HEK293T (cell line): ENCODE measurements at regions of chr2 and their contacts with region 1.

Region 1: GRCh38 chr2:121128754-121129659 is 156.0 kb downstream of the TFCP2L1 start:
- DNase-seq: peak; percentile 66

Region 2: DNA sequence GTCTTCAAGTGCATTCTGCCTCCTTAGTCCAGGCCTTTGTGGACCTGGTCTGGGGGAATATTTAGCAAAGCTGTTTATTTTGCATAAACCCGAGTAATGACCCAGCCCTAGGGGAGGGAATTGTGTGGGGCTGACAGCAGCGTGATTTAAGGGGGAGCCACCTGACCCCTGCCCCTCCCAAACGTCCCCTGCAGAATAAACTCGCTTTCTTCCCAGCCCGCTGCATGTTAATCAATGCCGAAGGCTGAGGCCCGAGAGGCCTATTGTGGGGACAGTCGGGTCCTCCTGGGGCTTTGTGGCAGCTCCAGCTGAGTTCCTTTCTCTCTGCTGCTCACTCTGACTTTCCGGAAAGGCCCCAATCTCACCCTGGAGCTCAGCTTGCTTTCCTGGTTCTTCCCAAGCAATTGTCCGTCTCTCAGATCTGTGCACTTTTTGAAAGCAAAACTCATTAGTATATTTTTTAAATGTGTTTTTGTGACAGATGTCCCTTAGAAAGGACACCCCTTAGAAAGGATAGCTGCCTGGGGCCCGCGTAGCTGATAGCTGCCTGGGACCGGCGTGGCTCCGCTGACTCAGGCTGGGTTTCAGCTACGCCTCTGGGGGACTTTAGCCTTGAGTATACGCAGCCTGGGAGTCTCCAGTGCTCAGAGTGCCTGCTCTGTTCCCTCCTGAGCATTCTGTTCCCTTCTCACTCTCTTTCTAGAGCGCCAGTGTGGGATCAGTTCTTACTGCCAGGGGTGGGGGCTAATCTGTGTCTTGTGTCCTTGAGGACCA is 235.0 kb before region 1 on chr2:
- CTCF ChIA-PET with region 1: no interaction called
- POLR2A ChIA-PET with region 1: no interaction called
- DNase-seq: peak; percentile 28

Region 3: DNA sequence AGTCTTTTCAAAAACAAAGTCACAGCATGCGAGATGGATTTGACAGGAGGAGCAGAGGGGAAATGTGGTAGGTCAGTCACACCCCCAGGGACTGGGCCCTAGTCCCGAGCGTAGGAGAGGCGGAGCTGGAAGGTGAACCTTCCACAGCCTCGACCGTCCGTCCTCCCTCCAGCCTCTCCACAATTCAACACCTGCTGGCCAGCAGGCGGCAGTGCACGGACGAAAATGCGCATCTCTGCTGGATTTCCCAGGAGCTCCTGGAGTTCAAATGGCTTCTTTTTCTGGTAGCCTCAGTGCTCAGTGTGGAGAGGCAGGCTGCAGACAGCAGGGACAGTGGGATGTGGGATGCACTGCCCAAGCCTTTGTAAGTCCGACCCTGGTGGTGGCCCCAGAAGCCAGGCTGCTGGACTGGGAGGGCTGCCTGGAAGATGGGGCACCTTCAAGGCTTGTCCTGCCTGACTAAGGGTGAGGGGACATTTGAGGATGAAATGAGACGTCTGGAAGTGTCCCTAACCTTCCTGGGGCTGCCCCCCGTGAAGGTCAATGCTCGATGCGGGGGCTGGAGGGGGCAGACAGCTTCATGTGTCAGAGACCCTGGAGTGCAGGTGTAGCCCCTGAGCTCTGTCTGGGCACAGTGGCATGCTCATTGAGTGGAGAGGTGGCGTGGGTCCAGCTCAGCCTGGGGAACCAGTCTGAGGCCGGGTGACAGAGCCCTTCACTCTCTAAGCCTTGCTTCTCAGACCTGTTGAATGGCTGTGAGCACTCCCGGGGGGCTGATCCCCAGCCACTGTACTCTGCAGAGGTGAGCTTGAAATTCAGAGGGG is 33.5 kb before region 1 on chr2:
- CTCF ChIA-PET with region 1: interaction called, 18 read pairs
- POLR2A ChIA-PET with region 1: interaction called, 3 read pairs
- DNase-seq: peak; percentile 85

Region 4: GRCh38 chr2:121140734-121141133 is 11.7 kb after region 1 on chr2:
- CTCF ChIA-PET with region 1: interaction called, 12 read pairs
- POLR2A ChIA-PET with region 1: no interaction called
- DNase-seq: no peak

Region 5: GRCh38 chr2:121356058-121356640 is 227.1 kb after region 1 on chr2:
- CTCF ChIA-PET with region 1: interaction called, 33 read pairs
- POLR2A ChIA-PET with region 1: no interaction called
- DNase-seq: peak; percentile 70